PC-3 (cell line): ENCODE measurements at regions of chr14 and their contacts with region 1.

Region 1: GRCh38 chr14:84303140-84303539 is 1226.8 kb upstream of the FLRT2 start:
- DNase-seq: no peak
- ATAC-seq: no peak
- H3K4me3 ChIP-seq: no peak overlapping the region
- H3K27ac ChIP-seq: no peak overlapping the region
- H3K4me1 ChIP-seq: no peaks in the 10 kb centered on the region
- H3K27me3 ChIP-seq: no peaks in the 10 kb centered on the region
- CTCF ChIP-seq: no peak

Region 2: GRCh38 chr14:84209021-84209420 is 94.1 kb before region 1 on chr14:
- CTCF ChIA-PET with region 1: no interaction called
- POLR2A ChIA-PET with region 1: no interaction called
- intact Hi-C with region 1: no loop called
- DNase-seq: no peak
- ATAC-seq: no peak
- H3K4me3 ChIP-seq: no peak overlapping the region
- H3K27ac ChIP-seq: no peak overlapping the region
- H3K4me1 ChIP-seq: no peaks in the 10 kb centered on the region
- H3K27me3 ChIP-seq: no peaks in the 10 kb centered on the region
- CTCF ChIP-seq: no peak

Region 3: DNA sequence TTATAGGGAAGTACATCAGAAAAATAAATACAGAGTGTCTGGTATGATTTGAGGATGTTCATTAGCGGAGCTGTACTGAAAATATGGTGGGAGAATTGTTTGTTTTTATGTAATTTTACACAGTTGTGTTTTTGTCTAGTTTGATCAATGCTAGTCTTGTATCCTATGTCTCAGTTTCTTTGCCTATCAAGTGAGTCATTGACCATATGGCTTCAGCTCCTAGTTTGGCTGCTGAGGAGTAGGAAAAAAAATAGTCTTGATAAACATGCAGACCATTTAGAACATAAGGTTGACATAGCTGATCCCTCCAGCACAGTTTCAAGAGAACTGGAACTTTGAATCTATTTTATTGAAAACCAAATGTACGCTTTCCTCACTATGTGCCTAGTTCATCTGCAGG is 65.3 kb before region 1 on chr14:
- CTCF ChIA-PET with region 1: no interaction called
- POLR2A ChIA-PET with region 1: interaction called, 12 read pairs
- intact Hi-C with region 1: no loop called
- DNase-seq: no peak
- ATAC-seq: no peak
- H3K4me3 ChIP-seq: no peak overlapping the region
- H3K27ac ChIP-seq: no peak overlapping the region
- H3K4me1 ChIP-seq: no peaks in the 10 kb centered on the region
- H3K27me3 ChIP-seq: no peaks in the 10 kb centered on the region
- CTCF ChIP-seq: no peak

Region 4: GRCh38 chr14:84282618-84283017 is 20.5 kb before region 1 on chr14:
- CTCF ChIA-PET with region 1: no interaction called
- POLR2A ChIA-PET with region 1: no interaction called
- intact Hi-C with region 1: no loop called
- DNase-seq: no peak
- ATAC-seq: no peak
- H3K4me3 ChIP-seq: no peak overlapping the region
- H3K27ac ChIP-seq: no peak overlapping the region
- H3K4me1 ChIP-seq: no peaks in the 10 kb centered on the region
- H3K27me3 ChIP-seq: no peaks in the 10 kb centered on the region
- CTCF ChIP-seq: no peak